ENCODE measurements at regions of chr5 and their contacts with region 1.

Region 1: DNA sequence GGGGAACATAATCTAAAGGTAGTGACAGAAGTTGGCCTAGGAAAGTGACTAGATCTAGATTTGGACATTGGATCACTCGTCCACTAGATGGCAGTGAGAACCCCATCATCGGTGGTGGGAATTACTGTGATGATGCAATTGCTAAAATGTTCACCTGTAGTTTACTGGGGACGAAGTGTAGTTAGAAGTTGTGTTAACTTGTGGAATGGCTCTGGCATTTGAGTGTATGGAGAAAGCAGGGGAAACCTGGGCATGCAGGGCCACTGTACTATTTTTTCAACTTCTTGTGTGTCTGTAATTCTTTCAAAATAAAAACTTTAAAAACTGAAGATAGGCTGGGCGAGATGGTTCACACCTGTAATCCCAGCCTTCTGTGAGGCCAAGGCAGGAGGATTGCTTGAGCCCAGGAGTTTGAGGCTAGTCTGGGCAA is 75.5 kb downstream of the PHAX start:
- DNase-seq: peak; percentile 82
- CTCF ChIP-seq: peak; percentile 75

Region 2: GRCh38 chr5:126395198-126395597 is 281.0 kb before region 1 on chr5:
- in situ Hi-C with region 1: no loop called
- DNase-seq: no peak
- CTCF ChIP-seq: no peak

Region 3: GRCh38 chr5:126499853-126500342 is 176.3 kb before region 1 on chr5:
- in situ Hi-C with region 1: no loop called
- DNase-seq: peak; percentile 41
- CTCF ChIP-seq: peak; percentile 35

Region 4: DNA sequence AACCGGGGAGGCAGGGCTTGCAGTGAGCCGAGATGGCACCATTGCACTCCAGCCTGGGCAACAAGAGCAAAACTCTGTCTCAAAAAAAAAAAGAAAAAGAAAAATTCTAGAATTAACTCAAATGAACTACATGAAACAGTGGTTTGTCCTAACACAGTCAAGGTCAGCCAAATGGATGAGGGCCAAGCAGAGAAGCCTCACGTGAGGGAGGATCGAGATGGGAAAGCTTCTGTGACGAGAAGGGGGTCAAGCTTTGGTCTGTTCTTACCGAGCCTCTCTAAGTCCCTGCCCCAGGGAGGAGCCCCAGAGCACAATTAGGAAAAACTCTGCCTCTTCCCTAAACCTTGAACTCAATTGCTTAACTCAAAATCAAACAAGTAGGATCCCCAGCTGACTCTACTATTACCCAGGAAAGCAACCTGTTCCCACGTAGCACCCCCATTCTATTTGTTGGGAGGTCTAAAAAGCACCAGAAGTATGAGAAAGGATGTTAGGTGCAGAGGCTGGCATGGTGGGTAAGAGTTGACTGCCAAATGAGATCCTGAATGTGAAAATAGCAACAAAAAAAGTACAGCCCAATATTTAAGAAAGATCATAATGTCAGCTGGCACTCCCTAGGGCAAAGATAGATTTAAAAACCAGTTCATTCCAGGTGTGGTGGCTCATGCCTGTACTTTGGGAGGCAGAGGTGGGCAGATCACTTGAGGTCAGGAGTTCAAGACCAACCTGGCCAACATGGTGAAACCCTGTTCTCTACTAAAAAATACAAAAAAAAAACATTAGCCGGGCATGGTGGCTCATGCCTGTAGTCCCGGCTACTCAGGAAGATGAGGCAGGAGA is 88.4 kb before region 1 on chr5:
- in situ Hi-C with region 1: no loop called
- DNase-seq: no peak
- CTCF ChIP-seq: no peak

Region 5: GRCh38 chr5:126718246-126718868 is 42.1 kb after region 1 on chr5:
- in situ Hi-C with region 1: loop called (anchors 5 kb)
- DNase-seq: no peak
- CTCF ChIP-seq: no peak

Region 6: DNA sequence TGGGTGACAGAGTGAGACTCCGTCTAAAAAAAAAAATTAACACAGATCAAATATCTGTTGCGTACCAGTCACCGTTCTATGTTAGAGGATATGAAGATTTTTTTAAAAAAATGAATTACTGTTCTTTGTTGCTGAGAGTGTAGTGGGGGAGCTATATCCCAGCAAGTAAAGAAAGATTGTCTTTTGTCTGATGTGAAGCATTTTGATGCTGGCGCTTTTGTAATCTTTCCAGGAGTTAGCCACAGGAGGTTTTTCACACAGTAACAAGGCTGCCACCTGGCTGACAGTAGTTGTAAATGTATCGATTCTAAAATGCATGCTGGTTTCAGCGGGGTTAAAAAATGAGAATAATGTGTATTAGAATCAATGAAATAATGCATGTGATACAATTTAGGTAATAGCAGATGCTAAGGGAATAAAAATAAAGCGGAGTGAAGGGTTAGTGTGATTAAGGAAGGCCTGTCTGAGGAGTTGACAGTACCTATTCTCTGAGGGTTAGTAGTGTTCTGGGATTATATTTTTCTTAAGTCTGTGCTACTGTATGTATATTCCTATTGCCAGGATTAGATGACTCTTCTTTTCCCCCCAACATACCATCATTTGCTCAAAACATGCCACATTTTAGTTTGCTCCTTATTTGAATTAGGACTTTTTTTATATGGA is 104.1 kb after region 1 on chr5:
- in situ Hi-C with region 1: loop called (anchors 10 kb)
- DNase-seq: peak; percentile 71
- CTCF ChIP-seq: peak; percentile 37

Region 7: GRCh38 chr5:126896170-126896717 is 220.0 kb after region 1 on chr5:
- in situ Hi-C with region 1: no loop called
- DNase-seq: no peak
- CTCF ChIP-seq: no peak